T-cell (primary cell): ENCODE measurements at regions of chr19 and their contacts with region 1.

Region 1: GRCh38 chr19:37991176-37991835 is 84.3 kb downstream of the SIPA1L3 start:
- DNase-seq: no peak
- ATAC-seq: no peak
- H3K4me3 ChIP-seq: no peak overlapping the region
- H3K4me3 Mint-ChIP-seq: no peak overlapping the region
- H3K27ac ChIP-seq: no peak overlapping the region
- H3K27ac Mint-ChIP-seq: no peak overlapping the region
- H3K4me1 ChIP-seq: peaks cover 0 to 5% of the 10 kb centered on the region in 2 experiments
- H3K4me1 Mint-ChIP-seq: peaks cover 13 to 28% (median 19%) of the 10 kb centered on the region in 3 donors
- H3K27me3 ChIP-seq: no peaks in the 10 kb centered on the region
- H3K27me3 Mint-ChIP-seq: no peaks in the 10 kb centered on the region

Region 2: DNA sequence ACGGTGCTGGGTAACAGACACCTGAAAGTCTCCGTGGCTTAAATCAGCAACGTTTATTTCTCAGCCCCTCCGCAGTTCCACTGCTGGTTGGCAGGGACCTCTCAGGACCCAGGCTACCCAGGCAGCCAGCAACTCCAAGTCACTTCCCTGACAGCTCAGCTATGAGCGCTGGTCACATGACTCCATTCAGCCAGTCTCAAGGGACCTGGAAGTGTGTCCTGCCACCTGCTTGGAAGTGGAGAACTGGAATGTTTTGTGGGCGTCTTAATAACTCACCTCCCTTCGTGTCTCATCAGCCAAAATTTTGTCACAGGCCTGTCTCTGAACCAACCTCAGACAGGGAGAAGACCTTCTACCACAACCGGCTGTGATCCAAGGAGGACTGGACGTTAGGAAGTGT is 159.9 kb after region 1 on chr19:
- CTCF ChIA-PET with region 1: interaction called in 1 of 2 experiments, 15 read pairs
- POLR2A ChIA-PET with region 1: no interaction called
- DNase-seq: no peak
- ATAC-seq: no peak
- H3K4me3 ChIP-seq: no peak overlapping the region
- H3K4me3 Mint-ChIP-seq: no peak overlapping the region
- H3K27ac ChIP-seq: no peak overlapping the region
- H3K27ac Mint-ChIP-seq: no peak overlapping the region
- H3K4me1 ChIP-seq: no peaks in the 10 kb centered on the region
- H3K4me1 Mint-ChIP-seq: no peaks in the 10 kb centered on the region
- H3K27me3 ChIP-seq: no peaks in the 10 kb centered on the region
- H3K27me3 Mint-ChIP-seq: no peaks in the 10 kb centered on the region